Common myeloid progenitor, CD34-positive (primary cell): ENCODE measurements at regions of chr22 and their contacts with region 1.

Region 1: DNA sequence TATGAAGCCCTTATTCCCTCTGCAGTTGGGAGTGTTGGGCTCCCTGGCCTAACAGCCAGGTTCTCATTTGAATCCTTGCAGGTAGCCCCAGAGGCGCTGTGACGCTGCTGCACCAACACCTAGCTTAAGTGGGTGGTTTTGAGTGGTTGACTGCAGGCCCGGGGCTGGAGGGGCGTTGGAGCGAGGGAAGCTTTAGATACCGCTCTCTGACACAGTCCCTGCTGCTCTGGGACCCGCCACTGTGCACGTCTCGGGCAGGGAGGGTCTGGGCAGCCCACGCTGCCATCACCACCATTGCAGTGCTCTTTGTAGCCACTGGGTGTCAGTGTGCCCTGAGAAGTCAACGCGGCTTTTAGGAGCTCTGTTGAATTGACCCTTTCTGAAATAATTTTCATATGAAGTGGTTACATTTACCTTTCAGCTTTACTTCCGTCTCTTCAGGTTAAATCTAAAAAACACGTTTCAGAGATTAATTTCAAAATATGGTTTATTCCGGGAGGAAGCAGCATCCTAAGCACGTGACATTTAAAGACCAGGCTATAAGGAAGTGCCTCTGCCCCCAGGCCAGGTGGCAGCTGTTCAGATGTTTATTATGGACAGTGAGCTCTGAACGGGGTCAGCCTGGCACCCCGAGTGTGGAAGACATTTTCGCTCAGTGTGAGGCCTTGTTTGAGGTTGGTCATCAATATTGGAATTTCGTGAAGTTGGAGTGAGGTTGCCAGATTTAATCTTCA is 30.9 kb upstream of the PARVB start:
- DNase-seq: peak; percentile 56 to 80 (median 75)
- H3K4me3 ChIP-seq: no peak overlapping the region
- H3K27ac ChIP-seq: no peak overlapping the region
- H3K4me1 ChIP-seq: peaks cover 0 to 19% (median 13%) of the 10 kb centered on the region in 4 experiments
- H3K27me3 ChIP-seq: no peaks in the 10 kb centered on the region

Region 2: GRCh38 chr22:43957871-43958270 is 35.3 kb before region 1 on chr22:
- CTCF ChIA-PET with region 1: no interaction called
- POLR2A ChIA-PET with region 1: no interaction called
- DNase-seq: no peak
- H3K4me3 ChIP-seq: no peak overlapping the region
- H3K27ac ChIP-seq: no peak overlapping the region
- H3K4me1 ChIP-seq: peaks cover 12 to 27% (median 22%) of the 10 kb centered on the region in 4 experiments
- H3K27me3 ChIP-seq: no peaks in the 10 kb centered on the region

Region 3: GRCh38 chr22:44005524-44005923 is 12.3 kb after region 1 on chr22:
- CTCF ChIA-PET with region 1: interaction called, 16 read pairs
- POLR2A ChIA-PET with region 1: no interaction called
- DNase-seq: peak; percentile 34 to 84 (median 70)
- H3K4me3 ChIP-seq: no peak overlapping the region
- H3K27ac ChIP-seq: no peak overlapping the region
- H3K4me1 ChIP-seq: peaks cover 0 to 4% (median 0%) of the 10 kb centered on the region in 4 experiments
- H3K27me3 ChIP-seq: no peaks in the 10 kb centered on the region

Region 4: GRCh38 chr22:44033694-44034093 is 40.5 kb after region 1 on chr22:
- CTCF ChIA-PET with region 1: interaction called, 12 read pairs
- POLR2A ChIA-PET with region 1: no interaction called
- DNase-seq: no peak
- H3K4me3 ChIP-seq: no peak overlapping the region
- H3K27ac ChIP-seq: no peak overlapping the region
- H3K4me1 ChIP-seq: peaks cover 4 to 30% (median 22%) of the 10 kb centered on the region in 4 experiments
- H3K27me3 ChIP-seq: no peaks in the 10 kb centered on the region

Region 5: GRCh38 chr22:44068422-44069191 is 75.4 kb after region 1 on chr22:
- CTCF ChIA-PET with region 1: interaction called, 41 read pairs
- POLR2A ChIA-PET with region 1: no interaction called
- DNase-seq: peak; percentile 89 to 99 (median 97)
- H3K4me3 ChIP-seq: peak overlapping the region in 3 of 7 experiments; percentile 22 to 54 (median 34)
- H3K27ac ChIP-seq: peak overlapping the region; percentile 80 to 91
- H3K4me1 ChIP-seq: peaks cover 0 to 41% (median 33%) of the 10 kb centered on the region in 4 experiments
- H3K27me3 ChIP-seq: no peaks in the 10 kb centered on the region

Region 6: GRCh38 chr22:44116755-44117684 is 123.8 kb after region 1 on chr22:
- CTCF ChIA-PET with region 1: no interaction called
- POLR2A ChIA-PET with region 1: no interaction called
- DNase-seq: peak in 2 of 3 donors; percentile 59 to 64
- H3K4me3 ChIP-seq: no peak overlapping the region
- H3K27ac ChIP-seq: no peak overlapping the region
- H3K4me1 ChIP-seq: peaks cover 0 to 11% (median 6%) of the 10 kb centered on the region in 4 experiments
- H3K27me3 ChIP-seq: no peaks in the 10 kb centered on the region

Region 7: GRCh38 chr22:44625981-44626687 is 632.9 kb after region 1 on chr22:
- CTCF ChIA-PET with region 1: interaction called, 30 read pairs
- POLR2A ChIA-PET with region 1: interaction called, 3 read pairs
- DNase-seq: peak; percentile 67 to 81 (median 76)
- H3K4me3 ChIP-seq: no peak overlapping the region
- H3K27ac ChIP-seq: no peak overlapping the region
- H3K4me1 ChIP-seq: peaks cover 0 to 5% (median 2%) of the 10 kb centered on the region in 4 experiments
- H3K27me3 ChIP-seq: no peaks in the 10 kb centered on the region